Heart right ventricle (tissue), 16 donors: ENCODE measurements at regions of chr2 and their contacts with region 1.

Region 1: GRCh38 chr2:14951569-14952285 is 319.2 kb downstream of the LRATD1 start:
- DNase-seq: no peak
- ATAC-seq: no peak
- H3K4me3 ChIP-seq: no peak overlapping the region
- H3K27ac ChIP-seq: no peak overlapping the region
- H3K4me1 ChIP-seq: no peaks in the 10 kb centered on the region
- H3K27me3 ChIP-seq: no peaks in the 10 kb centered on the region
- CTCF ChIP-seq: no peak

Region 2: GRCh38 chr2:14781137-14781536 is 170.6 kb before region 1 on chr2:
- intact Hi-C with region 1: no loop called
- DNase-seq: no peak
- ATAC-seq: no peak
- H3K4me3 ChIP-seq: no peak overlapping the region
- H3K27ac ChIP-seq: no peak overlapping the region
- H3K4me1 ChIP-seq: no peaks in the 10 kb centered on the region
- H3K27me3 ChIP-seq: no peaks in the 10 kb centered on the region
- CTCF ChIP-seq: no peak

Region 3: GRCh38 chr2:14903709-14904374 is 47.9 kb before region 1 on chr2:
- intact Hi-C with region 1: loop called in 1 of 10 experiments (anchors 5 kb)
- DNase-seq: peak in 1 of 2 donors; percentile 20
- ATAC-seq: peak in 1 of 8 donors; percentile 28
- H3K4me3 ChIP-seq: no peak overlapping the region
- H3K27ac ChIP-seq: no peak overlapping the region
- H3K4me1 ChIP-seq: no peaks in the 10 kb centered on the region
- H3K27me3 ChIP-seq: peaks cover 0 to 4% (median 0%) of the 10 kb centered on the region in 7 donors
- CTCF ChIP-seq: peak in 7 of 9 donors; percentile 26 to 59 (median 38)